Naive thymus-derived CD8-positive, alpha-beta T cell (primary cell): ENCODE measurements at regions of chr19 and their contacts with region 1.

Region 1: GRCh38 chr19:46860846-46861690 is at the start of gene ARHGAP35:
- DNase-seq: peak in 4 of 10 donors; percentile 8 to 84 (median 78)
- ATAC-seq: peak; percentile 19 to 49
- H3K4me3 Mint-ChIP-seq: peak within 1 kb of the TSS in 9 of 10 donors; percentile 92 to 98 (median 95)
- H3K27ac Mint-ChIP-seq: peak within 1 kb of the TSS; percentile 23 to 99 (median 94)
- H3K4me1 Mint-ChIP-seq: peaks cover 10 to 24% (median 14%) of the 10 kb centered on the region in 4 donors
- H3K27me3 Mint-ChIP-seq: no peaks in the 10 kb centered on the region
- polyA plus RNA-seq, gene ARHGAP35: 2.0 to 3.3 (median 2.1) TPM

Region 2: GRCh38 chr19:46850228-46851203 is 10.6 kb before region 1 on chr19 and contains the start of gene AP2S1:
- POLR2A ChIA-PET with region 1: interaction called, 10 read pairs
- DNase-seq: peak; percentile 76 to 97 (median 93)
- ATAC-seq: peak; percentile 94 to 95
- H3K4me3 Mint-ChIP-seq: peak within 1 kb of the TSS; percentile 85 to 99 (median 92)
- H3K27ac Mint-ChIP-seq: peak within 1 kb of the TSS; percentile 53 to 95 (median 92)
- H3K4me1 Mint-ChIP-seq: peaks cover 25 to 36% (median 28%) of the 10 kb centered on the region in 4 donors
- H3K27me3 Mint-ChIP-seq: no peaks in the 10 kb centered on the region
- polyA plus RNA-seq, gene AP2S1: 63.8 to 68.3 (median 65.2) TPM

Region 3: DNA sequence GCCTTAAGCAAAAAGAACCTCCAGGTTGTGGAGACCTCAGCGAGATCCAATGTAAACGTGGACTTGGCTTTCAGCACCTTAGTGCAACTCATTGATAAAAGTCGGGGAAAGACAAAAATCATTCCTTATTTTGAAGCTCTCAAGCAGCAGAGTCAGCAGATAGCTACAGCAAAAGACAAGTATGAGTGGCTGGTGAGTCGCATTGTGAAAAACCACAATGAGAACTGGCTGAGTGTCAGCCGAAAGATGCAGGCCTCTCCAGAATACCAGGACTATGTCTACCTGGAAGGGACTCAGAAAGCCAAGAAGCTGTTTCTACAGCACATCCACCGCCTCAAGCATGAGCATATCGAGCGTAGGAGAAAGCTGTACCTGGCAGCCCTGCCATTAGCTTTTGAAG is 58.3 kb after region 1 on chr19:
- POLR2A ChIA-PET with region 1: no interaction called
- DNase-seq: no peak
- ATAC-seq: no peak
- H3K4me3 Mint-ChIP-seq: no peak overlapping the region
- H3K27ac Mint-ChIP-seq: peak overlapping the region in 1 of 10 donors; percentile 31
- H3K4me1 Mint-ChIP-seq: peaks cover 9 to 37% (median 30%) of the 10 kb centered on the region in 4 donors
- H3K27me3 Mint-ChIP-seq: no peaks in the 10 kb centered on the region